HAP-1 (cell line): ENCODE measurements at regions of chr1 and their contacts with region 1.

Region 1: DNA sequence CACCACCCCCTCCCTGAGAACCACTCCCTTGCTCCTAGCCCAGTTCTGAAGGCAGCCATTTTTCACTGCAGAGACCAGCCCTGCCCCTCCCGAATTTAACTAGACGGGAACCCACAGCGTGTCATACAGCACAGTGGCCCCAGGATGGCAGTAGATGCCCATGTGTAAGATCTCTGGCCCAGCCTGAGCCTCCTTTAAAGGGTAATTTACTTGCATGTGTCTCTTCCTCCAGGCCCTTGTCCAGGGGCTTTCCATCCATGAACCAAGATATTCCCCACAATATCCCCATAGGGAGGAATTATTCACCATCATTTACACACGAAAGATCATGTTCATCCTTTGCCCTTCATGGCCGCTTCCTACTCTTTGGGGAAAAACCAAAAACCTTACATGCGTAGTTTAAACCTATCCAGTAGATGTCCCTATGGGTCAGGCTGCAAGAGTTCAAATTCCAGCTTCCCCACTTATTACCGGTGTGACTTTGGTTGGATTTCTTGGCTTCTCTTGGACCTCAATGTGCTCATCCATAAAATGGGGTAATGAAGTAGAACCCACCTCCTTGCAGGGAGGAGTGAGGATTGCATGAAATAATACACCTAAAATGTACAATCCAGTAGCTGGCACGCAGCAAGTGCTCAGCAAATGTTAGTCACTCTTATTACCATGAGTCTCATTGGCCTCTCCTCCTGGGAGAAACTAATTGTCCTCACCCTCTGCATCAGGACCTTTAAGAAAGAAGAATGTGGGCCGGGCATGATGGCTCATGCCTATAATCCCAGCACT is 4.0 kb upstream of the LACTBL1 start:
- DNase-seq: peak; percentile 78 to 86
- H3K4me3 ChIP-seq: no peak overlapping the region
- H3K4me1 ChIP-seq: no peaks in the 10 kb centered on the region
- H3K27me3 ChIP-seq: no peaks in the 10 kb centered on the region; the same call in 1 of the 2 replicates

Region 2: GRCh38 chr1:23081376-23081775 is 104.7 kb after region 1 on chr1:
- in situ Hi-C with region 1: loop called (anchors 10 kb)
- DNase-seq: no peak
- H3K4me3 ChIP-seq: no peak overlapping the region
- H3K4me1 ChIP-seq: no peaks in the 10 kb centered on the region; the same call in 1 of the 2 replicates
- H3K27me3 ChIP-seq: no peaks in the 10 kb centered on the region

Region 3: DNA sequence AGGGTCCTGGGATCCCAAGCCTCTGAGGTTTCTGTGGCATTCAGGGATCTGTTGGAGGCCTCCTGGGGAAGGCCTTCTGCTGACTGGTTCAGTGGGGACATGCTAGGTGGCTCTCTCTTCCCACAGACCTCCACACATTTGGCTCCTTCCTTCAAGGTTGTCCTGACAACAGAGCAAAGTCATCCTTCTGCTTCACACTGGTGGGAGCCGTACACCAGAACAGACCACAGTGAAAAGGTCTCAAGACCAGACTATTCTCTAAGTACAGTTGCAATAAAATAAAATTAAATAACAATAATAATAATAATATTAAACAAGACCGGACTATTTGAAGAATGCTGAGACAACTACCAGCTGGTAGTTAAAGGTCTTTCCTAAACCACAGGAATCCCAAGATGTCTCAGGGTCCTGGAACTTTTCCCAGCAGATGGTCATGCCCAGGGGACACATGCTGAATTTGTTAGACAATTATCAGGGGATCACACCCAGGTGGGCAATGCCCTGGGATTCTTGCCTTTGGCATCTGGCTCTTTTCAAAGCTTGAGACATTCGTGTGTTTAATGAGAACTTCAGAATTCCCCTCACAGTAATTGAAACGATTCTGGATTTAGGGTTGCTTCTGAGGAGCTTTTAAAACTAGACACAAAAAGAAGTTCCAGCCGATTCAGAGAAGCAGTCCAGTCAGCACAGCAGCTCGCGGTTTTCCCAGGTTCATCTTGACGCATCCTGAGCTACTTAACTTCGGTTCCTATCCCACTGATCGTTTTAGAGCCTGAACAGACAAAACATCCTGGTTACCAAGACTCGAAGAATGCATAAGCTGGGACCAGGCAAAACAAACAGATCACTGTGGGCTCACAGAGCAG is 217.7 kb after region 1 on chr1:
- in situ Hi-C with region 1: loop called (anchors 5 kb)
- DNase-seq: no peak
- H3K4me3 ChIP-seq: no peak overlapping the region
- H3K4me1 ChIP-seq: no peaks in the 10 kb centered on the region
- H3K27me3 ChIP-seq: no peaks in the 10 kb centered on the region